CD8-positive, alpha-beta T cell (primary cell): ENCODE measurements at regions of chr4 and their contacts with region 1.

Region 1: GRCh38 chr4:138680989-138681604 is 334.5 kb upstream of the NOCT start:
- DNase-seq: peak; percentile 6 to 76 (median 63)
- ATAC-seq: no peak
- H3K4me3 ChIP-seq: no peak overlapping the region
- H3K4me3 Mint-ChIP-seq: no peak overlapping the region
- H3K27ac ChIP-seq: no peak overlapping the region
- H3K27ac Mint-ChIP-seq: no peak overlapping the region
- H3K4me1 ChIP-seq: no peaks in the 10 kb centered on the region
- H3K4me1 Mint-ChIP-seq: no peaks in the 10 kb centered on the region
- H3K27me3 ChIP-seq: no peaks in the 10 kb centered on the region
- H3K27me3 Mint-ChIP-seq: peaks cover 17% of the 10 kb centered on the region
- CTCF ChIP-seq: peak; percentile 82

Region 2: DNA sequence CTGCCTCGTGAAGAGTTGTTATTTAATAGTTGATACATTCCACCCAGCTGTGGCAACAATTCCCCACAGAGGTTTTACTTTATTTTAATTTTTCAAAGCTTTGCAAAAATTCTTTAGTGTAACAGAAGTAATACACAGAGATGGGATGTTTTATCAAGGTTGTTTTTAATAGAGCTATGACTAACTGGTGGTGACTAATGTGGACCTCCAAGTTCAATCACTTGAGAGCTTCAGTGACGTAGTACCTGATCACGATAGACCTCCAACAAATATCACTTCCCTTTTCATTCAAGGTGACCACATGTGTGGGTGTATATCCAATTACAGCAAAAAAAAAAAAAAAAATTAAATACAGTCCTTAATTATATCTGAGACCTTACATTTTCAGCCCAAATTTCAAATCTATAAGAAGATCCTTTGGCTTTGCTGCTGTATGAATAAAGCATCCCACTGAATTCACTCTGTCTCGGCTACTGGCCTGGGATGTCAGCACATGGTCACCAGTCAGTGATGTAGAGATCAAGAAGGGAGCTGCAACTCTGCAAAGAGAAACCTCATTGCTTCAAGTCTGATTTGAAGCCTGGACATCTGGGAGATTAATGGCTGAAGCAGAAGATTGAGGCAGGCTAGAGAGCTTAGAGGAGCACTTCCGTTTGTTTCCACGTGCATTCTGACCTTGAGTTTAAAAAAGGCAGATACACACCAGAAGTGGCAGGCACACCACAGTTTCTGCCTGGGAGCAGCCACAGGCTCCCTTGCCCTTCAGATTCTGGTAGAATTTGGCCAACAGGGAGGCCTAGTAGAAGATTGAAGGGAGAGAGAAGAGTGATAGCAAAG is 11.4 kb before region 1 on chr4:
- CTCF ChIA-PET with region 1: interaction called, 20 read pairs
- POLR2A ChIA-PET with region 1: no interaction called
- intact Hi-C with region 1: no loop called
- DNase-seq: no peak
- ATAC-seq: no peak
- H3K4me3 ChIP-seq: no peak overlapping the region
- H3K4me3 Mint-ChIP-seq: no peak overlapping the region
- H3K27ac ChIP-seq: no peak overlapping the region
- H3K27ac Mint-ChIP-seq: no peak overlapping the region
- H3K4me1 ChIP-seq: no peaks in the 10 kb centered on the region
- H3K4me1 Mint-ChIP-seq: no peaks in the 10 kb centered on the region
- H3K27me3 ChIP-seq: no peaks in the 10 kb centered on the region
- H3K27me3 Mint-ChIP-seq: peaks cover 8% of the 10 kb centered on the region
- CTCF ChIP-seq: no peak